Dendritic cell treated with granulocyte-macrophage colony-stimulating factor and Interleukin-4, amounts not matched to agents 40 ng/mL and 50 ng/mL, for 4 days (primary cell): ENCODE measurements at regions of chr2 and their contacts with region 1.

Region 1: GRCh38 chr2:9630749-9631483 is at the start of gene YWHAQ:
- H3K4me3 Mint-ChIP-seq: peak within 1 kb of the TSS; percentile 99
- H3K27ac Mint-ChIP-seq: peak within 1 kb of the TSS; percentile 91
- H3K4me1 Mint-ChIP-seq: peaks cover 52% of the 10 kb centered on the region
- H3K27me3 Mint-ChIP-seq: peaks cover 10% of the 10 kb centered on the region

Region 2: GRCh38 chr2:8836971-8837794 is 793.7 kb before region 1 on chr2 and contains the start of gene KIDINS220:
- intact Hi-C with region 1: loop called (anchors 10 kb)
- H3K4me3 Mint-ChIP-seq: peak within 1 kb of the TSS; percentile 100
- H3K27ac Mint-ChIP-seq: peak within 1 kb of the TSS; percentile 98
- H3K4me1 Mint-ChIP-seq: peaks cover 46% of the 10 kb centered on the region
- H3K27me3 Mint-ChIP-seq: no peaks in the 10 kb centered on the region

Region 3: GRCh38 chr2:9124231-9124741 is 506.6 kb before region 1 on chr2:
- intact Hi-C with region 1: no loop called
- H3K4me3 Mint-ChIP-seq: no peak overlapping the region
- H3K27ac Mint-ChIP-seq: no peak overlapping the region
- H3K4me1 Mint-ChIP-seq: no peaks in the 10 kb centered on the region
- H3K27me3 Mint-ChIP-seq: no peaks in the 10 kb centered on the region

Region 4: GRCh38 chr2:9430316-9431293 is 200.3 kb before region 1 on chr2:
- intact Hi-C with region 1: no loop called
- H3K4me3 Mint-ChIP-seq: no peak overlapping the region
- H3K27ac Mint-ChIP-seq: no peak overlapping the region
- H3K4me1 Mint-ChIP-seq: no peaks in the 10 kb centered on the region
- H3K27me3 Mint-ChIP-seq: no peaks in the 10 kb centered on the region

Region 5: GRCh38 chr2:9538000-9538507 is 92.9 kb before region 1 on chr2:
- intact Hi-C with region 1: loop called (anchors 5 kb)
- H3K4me3 Mint-ChIP-seq: no peak overlapping the region
- H3K27ac Mint-ChIP-seq: peak overlapping the region; percentile 84
- H3K4me1 Mint-ChIP-seq: peaks cover 33% of the 10 kb centered on the region
- H3K27me3 Mint-ChIP-seq: no peaks in the 10 kb centered on the region

Region 6: DNA sequence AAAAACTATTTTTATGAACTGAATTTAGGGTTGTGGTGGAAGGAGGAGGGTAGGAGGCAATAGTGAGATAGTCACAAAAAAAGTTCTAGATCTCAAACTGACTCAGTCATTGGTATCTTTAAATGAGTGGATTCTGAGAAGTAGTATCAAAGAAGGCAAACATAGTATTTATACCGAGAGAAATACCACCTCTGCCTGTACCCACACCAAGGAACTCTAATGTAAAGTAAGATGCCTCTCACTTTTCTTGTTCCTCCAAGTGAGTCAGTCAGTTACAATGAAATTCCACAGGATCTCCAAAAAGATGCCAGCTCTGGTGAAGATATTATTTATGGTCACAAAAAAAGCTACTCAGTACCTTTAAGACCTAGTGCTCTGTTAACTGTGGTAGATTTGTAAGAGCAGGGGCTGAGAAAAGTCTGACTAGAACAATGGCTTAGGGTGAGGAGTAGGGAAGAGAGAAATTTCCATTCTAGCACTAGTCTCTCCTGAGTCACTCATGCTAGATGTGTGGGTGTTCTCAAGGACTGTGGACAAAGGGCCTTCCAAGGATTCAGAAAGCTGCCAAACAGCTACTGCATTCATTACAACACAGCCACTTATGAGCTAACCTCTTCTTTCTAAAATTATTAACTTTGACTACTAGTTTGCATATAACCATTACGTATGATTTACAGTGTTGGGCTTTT is 36.4 kb before region 1 on chr2:
- intact Hi-C with region 1: loop called (anchors 5 kb)
- H3K4me3 Mint-ChIP-seq: no peak overlapping the region
- H3K27ac Mint-ChIP-seq: peak overlapping the region; percentile 74
- H3K4me1 Mint-ChIP-seq: peaks cover 24% of the 10 kb centered on the region
- H3K27me3 Mint-ChIP-seq: no peaks in the 10 kb centered on the region

Region 7: DNA sequence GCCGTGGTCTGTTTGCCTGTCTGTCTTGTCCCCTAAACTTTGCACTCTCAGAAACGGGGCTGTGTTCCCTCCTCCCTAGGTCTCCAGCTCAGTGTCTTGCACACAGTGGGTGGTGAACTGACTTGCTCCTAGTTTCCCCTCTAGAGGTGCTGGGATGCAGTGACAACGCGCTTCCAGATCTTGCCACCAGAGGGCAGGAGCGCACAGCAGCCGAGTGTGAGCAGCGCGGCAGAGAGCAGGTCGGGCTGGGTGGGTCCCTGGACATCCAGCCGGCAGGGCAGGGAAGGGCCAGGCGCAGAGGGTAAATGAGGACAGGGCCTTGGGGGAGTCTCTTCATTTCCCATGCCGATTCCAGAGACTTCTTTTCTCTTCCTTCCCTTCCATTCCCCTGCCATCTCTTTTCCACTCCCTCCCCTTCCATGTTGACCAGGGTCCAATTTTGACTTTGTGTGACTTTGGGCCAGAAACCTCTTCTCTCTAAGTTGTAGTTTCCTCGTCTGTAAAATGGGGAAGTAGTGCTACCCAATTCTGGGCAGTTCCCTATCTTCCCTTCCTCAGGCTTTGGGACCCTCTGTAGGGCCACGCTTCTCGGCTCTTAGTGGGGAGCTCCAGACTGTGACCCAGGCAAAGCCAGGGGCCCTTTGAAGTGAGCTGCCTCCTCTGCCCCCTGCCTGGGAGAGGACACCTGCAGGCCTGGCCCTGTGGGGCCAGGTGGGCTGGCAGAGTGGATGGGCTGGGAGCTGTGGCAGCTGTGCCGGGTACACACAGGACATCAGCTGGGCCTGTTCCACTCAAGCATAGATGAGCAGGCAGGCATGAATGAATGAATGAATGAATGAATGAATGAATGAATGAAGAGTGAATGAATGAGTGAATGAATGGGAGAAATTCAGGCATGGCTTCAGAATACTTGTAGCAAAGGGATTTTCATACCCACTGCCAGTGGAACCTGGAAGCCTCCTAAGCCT is 169.0 kb after region 1 on chr2:
- intact Hi-C with region 1: loop called (anchors 5 kb)
- H3K4me3 Mint-ChIP-seq: peak overlapping the region; percentile 60
- H3K27ac Mint-ChIP-seq: peak overlapping the region; percentile 88
- H3K4me1 Mint-ChIP-seq: peaks cover 63% of the 10 kb centered on the region
- H3K27me3 Mint-ChIP-seq: peaks cover 2% of the 10 kb centered on the region

Region 8: DNA sequence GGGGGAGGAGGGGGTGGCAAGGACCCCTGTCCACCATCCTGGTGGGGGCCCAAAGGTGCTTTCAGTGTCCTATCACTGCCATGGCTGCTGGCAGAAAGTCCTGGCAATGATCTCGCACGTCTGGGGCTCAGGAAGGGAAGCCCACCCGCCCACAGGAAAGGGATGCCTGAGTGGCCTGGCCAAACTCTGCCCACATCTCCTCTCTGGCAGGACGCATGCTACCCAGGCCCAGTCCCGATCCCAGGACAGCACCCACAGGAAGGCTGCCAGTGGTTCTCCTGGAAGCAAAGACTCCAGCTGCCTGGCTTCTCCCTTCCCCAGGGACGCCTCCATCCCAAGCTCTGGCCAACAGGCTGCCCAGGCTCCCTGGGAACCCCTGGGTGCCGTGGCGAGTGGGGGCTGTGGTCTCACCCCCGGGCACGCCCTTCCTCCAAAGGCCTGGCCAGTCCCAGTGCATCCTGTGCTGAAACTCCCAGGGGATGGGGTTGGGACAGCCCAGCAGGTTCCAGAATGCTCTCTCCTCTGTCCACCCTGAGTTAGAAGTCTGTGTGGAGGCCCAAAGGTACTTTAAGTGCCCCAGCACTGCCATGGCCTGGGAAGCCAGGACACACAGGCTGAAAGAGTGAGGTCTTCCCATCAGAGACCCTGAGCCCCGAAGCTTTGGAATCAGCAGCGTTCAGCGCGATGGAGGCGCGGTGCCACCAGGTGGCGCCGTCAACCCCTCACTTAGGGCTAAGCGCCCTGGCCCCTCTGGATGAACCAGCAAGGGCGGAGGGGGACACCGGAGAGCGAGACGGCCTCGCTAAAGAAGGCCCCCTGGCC is 182.6 kb after region 1 on chr2:
- intact Hi-C with region 1: no loop called
- H3K4me3 Mint-ChIP-seq: peak overlapping the region; percentile 27
- H3K27ac Mint-ChIP-seq: peak overlapping the region; percentile 47
- H3K4me1 Mint-ChIP-seq: peaks cover 27% of the 10 kb centered on the region
- H3K27me3 Mint-ChIP-seq: peaks cover 20% of the 10 kb centered on the region